Lower leg skin (tissue), 4 donors: ENCODE measurements at regions of chr15 and their contacts with region 1.

Region 1: GRCh38 chr15:58546635-58547627 is 115.1 kb downstream of the LIPC start:
- DNase-seq: peak in 1 of 2 donors; percentile 85
- H3K4me3 ChIP-seq: no peak overlapping the region
- CTCF ChIP-seq: no peak
- POLR2A ChIP-seq: no peak

Region 2: GRCh38 chr15:58340176-58340575 is 206.8 kb before region 1 on chr15:
- intact Hi-C with region 1: no loop called
- DNase-seq: no peak
- H3K4me3 ChIP-seq: no peak overlapping the region
- CTCF ChIP-seq: no peak
- POLR2A ChIP-seq: no peak

Region 3: DNA sequence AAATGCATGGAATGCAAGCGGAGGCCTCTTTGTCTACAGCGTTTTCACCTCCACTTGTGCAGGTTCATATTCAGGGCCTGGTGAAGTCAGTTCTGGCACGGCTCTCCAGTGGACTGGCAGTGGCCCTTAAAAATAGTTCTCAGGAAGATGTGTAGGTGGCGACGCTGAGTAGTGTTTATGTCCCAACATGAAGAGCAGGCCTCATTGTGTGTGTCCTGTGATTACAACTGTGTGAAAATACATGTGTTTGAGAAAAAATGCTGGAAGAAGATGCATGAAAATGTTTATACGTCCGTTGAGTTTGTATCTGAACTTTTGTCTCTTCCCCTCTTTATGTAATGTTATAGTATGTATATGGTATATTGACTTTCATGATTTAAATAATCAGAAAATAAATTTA is 108.0 kb before region 1 on chr15:
- intact Hi-C with region 1: loop called (anchors 10 kb)
- DNase-seq: peak in 1 of 2 donors; percentile 84
- H3K4me3 ChIP-seq: no peak overlapping the region
- CTCF ChIP-seq: no peak
- POLR2A ChIP-seq: no peak

Region 4: GRCh38 chr15:58490086-58490887 is 56.6 kb before region 1 on chr15:
- intact Hi-C with region 1: no loop called
- DNase-seq: peak in 1 of 2 donors; percentile 85
- H3K4me3 ChIP-seq: no peak overlapping the region
- CTCF ChIP-seq: no peak
- POLR2A ChIP-seq: no peak

Region 5: DNA sequence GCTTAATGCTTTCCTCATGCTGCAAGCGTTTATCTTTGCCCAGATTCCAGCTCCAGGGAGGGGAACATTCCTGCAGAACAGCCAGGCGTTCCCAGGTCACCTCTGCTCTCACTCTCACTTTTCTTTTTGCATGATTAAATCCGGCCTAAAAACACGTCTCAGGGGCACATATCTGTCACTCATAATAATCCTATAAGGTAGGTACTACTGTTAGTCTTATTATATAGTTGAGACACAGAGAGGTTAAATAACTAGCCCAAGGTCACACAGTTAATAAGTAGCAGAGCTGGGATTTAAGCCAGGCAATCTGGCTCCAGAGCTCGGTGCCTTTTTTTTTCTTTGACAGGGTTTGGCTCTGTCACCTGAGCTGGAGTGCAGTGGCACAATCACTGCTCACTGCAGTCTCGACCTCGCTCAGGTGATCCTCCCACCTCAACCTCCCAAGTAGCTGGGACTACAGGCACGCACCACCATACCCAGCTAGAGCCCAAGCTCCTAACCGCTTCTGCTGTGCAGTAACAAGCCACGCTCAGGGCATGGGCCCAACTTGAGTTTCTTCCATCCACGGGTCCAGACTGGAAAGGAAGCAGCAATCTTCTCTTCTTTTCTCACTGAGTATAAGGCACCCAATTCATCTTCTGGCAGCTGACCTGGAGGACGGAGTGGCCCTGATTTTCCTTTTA is 18.6 kb before region 1 on chr15:
- intact Hi-C with region 1: no loop called
- DNase-seq: peak in 1 of 2 donors; percentile 82
- H3K4me3 ChIP-seq: no peak overlapping the region
- CTCF ChIP-seq: no peak
- POLR2A ChIP-seq: no peak

Region 6: DNA sequence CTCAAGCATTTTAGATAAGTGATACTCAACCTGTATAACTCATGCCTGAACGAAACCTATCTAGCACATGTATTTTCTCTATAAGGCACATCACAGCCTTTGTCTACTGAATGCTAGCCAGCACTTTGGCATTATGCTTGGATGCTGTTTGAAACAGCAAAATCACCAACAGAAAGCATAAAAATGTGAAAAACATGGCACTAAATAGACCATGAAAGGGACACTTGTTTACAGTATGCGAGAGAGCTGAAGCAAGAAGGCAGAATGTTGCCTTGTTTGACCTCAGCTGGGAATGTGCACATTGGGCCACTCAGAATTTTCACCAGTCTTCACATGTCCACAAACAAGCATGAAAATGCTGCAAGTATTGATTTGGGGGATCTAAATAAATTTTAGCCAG is 283.6 kb after region 1 on chr15:
- intact Hi-C with region 1: no loop called
- DNase-seq: no peak
- H3K4me3 ChIP-seq: no peak overlapping the region
- CTCF ChIP-seq: no peak
- POLR2A ChIP-seq: no peak